ENCODE measurements at regions of chr4 and their contacts with region 1.

Region 1: GRCh38 chr4:17544205-17544604 is 29.2 kb downstream of the CLRN2 start:
- DNase-seq: no peak
- CTCF ChIP-seq: no peak

Region 2: GRCh38 chr4:16785793-16786527 is 758.2 kb before region 1 on chr4:
- CTCF ChIA-PET with region 1: no interaction called
- POLR2A ChIA-PET with region 1: no interaction called
- DNase-seq: no peak
- CTCF ChIP-seq: no peak

Region 3: GRCh38 chr4:17567271-17567670 is 23.1 kb after region 1 on chr4:
- CTCF ChIA-PET with region 1: interaction called, 18 read pairs
- POLR2A ChIA-PET with region 1: no interaction called
- DNase-seq: no peak
- CTCF ChIP-seq: no peak

Region 4: DNA sequence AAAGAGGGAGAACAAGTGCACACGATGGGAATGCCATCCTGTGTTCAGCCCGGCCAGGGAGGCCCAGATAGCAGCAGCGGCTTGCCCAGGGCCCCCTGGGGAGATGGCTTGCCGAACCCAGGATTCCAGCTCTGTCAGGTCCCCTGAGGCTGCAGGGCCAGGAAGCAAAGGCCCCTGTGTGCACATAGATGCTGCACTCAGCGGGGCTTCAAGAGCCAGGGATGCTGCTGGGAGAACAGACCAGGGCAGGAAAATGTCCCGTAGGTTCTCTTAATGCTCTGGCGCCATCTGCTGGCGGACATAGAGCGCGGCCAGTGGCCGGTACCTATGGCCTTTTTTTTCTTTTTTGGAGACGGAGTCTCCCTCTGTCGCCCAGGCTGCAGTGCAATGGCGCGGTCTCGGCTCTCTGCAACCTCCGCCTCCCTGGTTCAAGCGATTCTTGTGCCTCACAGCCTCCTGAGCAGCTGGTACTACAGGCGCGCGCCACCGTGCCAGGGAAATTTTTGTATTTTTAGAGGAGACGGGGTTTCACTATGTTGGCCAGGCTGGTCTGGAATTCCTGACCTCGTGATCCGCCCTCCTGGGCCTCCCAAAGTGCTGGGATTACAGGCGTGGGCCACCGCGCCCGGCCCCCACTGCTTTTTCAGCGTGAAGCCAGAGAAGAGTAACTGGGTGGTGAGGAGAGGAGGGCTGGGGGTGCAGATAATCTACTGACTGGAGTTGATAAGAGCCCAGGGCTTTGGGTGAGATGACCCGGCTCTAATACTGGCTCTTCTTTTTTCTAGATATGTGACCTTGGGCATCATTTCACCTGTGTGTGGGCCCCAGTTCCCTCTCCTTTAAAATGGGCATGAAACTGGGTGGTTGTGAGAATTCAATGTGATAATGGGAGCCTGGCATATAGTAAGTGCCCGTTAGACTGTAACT is 92.8 kb after region 1 on chr4:
- CTCF ChIA-PET with region 1: interaction called, 40 read pairs
- POLR2A ChIA-PET with region 1: no interaction called
- DNase-seq: peak; percentile 85
- CTCF ChIP-seq: peak; percentile 90

Region 5: GRCh38 chr4:18366892-18367291 is 822.7 kb after region 1 on chr4:
- CTCF ChIA-PET with region 1: interaction called, 10 read pairs
- POLR2A ChIA-PET with region 1: no interaction called
- DNase-seq: no peak
- CTCF ChIP-seq: peak; percentile 74

Measured in GM10248 (cell line).